MCF 10A (cell line): ENCODE measurements at regions of chr7 and their contacts with region 1.

Region 1: DNA sequence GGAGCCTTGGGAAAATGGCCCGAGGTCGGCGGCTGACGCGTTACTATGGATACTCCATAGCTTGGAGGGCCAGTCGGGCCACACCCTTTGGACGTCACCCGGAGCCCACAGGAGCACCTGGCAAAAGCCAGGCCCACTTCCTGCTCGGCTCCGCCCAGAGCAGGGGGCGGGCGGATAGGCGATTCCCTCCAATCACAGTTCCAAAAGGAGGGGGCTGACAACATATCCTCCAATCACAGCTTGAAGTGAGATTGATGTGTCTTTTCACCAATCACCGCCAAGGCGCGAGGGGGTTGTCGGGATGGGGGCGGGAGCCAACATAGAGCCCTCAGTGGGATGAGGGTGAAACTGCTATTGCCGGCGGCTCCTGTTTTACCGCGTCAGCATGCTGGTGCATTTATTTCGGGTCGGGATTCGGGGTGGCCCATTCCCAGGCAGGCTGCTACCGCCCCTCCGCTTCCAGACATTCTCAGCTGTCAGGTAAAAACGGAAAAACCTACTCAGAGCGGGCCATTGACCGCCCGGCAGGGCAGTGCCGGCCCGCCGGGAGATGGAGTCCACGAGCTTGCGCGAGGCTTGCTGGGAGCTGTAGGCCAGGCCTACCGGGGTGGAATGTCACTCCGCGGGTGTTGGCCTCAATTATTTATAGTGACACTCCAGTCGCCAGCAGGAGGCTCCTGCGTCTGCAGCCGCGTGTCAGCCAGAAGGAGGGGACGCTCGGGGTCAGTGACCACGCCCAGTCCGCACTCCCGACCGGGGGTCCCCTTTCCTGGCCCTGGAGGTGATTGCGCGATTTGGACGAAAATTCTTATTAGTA is at the start of gene ABCB8:
- DNase-seq: peak; percentile 99
- H3K4me3 Mint-ChIP-seq: peak within 1 kb of the TSS; percentile 97
- H3K27ac Mint-ChIP-seq: peak within 1 kb of the TSS; percentile 100
- H3K4me1 Mint-ChIP-seq: peaks cover 29% of the 10 kb centered on the region
- H3K27me3 Mint-ChIP-seq: no peaks in the 10 kb centered on the region
- CTCF ChIP-seq: peak; percentile 37
- total RNA-seq, gene ABCB8: 73.4 and 76.1 TPM in 2 replicates

Region 2: GRCh38 chr7:151038951-151039849 is 10.9 kb after region 1 on chr7:
- CTCF ChIA-PET with region 1: interaction called, 4 read pairs
- POLR2A ChIA-PET with region 1: interaction called, 11 read pairs
- intact Hi-C with region 1: no loop called
- DNase-seq: peak; percentile 85
- H3K4me3 Mint-ChIP-seq: no peak overlapping the region
- H3K27ac Mint-ChIP-seq: peak overlapping the region; percentile 23
- H3K4me1 Mint-ChIP-seq: peaks cover 15% of the 10 kb centered on the region
- H3K27me3 Mint-ChIP-seq: no peaks in the 10 kb centered on the region
- CTCF ChIP-seq: no peak

Region 3: GRCh38 chr7:151057989-151058780 is 29.8 kb after region 1 on chr7:
- CTCF ChIA-PET with region 1: interaction called, 5 read pairs
- POLR2A ChIA-PET with region 1: interaction called, 42 read pairs
- intact Hi-C with region 1: loop called (anchors 1 kb)
- DNase-seq: peak; percentile 99
- H3K4me3 Mint-ChIP-seq: peak overlapping the region; percentile 97
- H3K27ac Mint-ChIP-seq: peak overlapping the region; percentile 87
- H3K4me1 Mint-ChIP-seq: peaks cover 34% of the 10 kb centered on the region
- H3K27me3 Mint-ChIP-seq: no peaks in the 10 kb centered on the region
- CTCF ChIP-seq: no peak

Region 4: DNA sequence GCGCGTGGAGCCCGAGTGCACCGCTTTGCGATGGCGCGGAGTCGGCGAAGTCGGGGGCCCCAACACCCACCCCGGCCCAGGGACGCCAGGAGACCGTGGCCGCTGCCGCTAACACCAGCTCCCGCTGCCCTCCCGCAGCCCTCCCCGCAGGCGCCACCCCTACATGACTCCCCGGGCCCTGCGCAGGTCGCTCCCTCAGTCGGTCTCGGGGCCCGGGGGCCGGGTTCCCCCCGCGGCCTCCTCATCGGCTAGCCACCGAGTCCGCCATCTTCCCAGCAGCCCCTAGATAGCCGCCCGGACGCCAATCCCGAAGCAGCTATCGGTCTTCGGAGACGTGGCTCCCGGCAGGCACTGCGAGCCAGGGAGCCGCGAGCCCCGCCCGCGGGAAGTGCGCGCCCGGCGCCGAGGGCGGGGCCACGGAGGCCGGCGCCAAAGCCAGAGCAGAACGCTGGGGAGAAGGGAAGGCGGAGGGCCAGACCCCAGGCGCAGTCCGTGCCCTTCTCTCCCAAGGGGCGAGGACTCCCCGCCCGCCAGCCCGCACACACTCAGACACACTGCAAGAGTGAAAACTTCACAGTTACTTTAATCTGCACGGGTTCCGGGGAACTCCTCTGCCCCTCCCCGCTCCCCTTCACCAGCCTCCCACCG is 52.3 kb after region 1 on chr7 and contains the start of gene FASTK:
- CTCF ChIA-PET with region 1: interaction called, 3 read pairs
- POLR2A ChIA-PET with region 1: interaction called, 14 read pairs
- intact Hi-C with region 1: loop called (anchors 2 kb)
- DNase-seq: peak; percentile 91
- H3K4me3 Mint-ChIP-seq: peak within 1 kb of the TSS; percentile 91
- H3K27ac Mint-ChIP-seq: peak within 1 kb of the TSS; percentile 83
- H3K4me1 Mint-ChIP-seq: peaks cover 32% of the 10 kb centered on the region
- H3K27me3 Mint-ChIP-seq: no peaks in the 10 kb centered on the region
- CTCF ChIP-seq: no peak
- total RNA-seq, gene FASTK: 79.3 and 83.6 TPM in 2 replicates

Region 5: GRCh38 chr7:151085691-151086620 is 57.6 kb after region 1 on chr7 and contains the start of gene AGAP3:
- CTCF ChIA-PET with region 1: interaction called, 3 read pairs
- POLR2A ChIA-PET with region 1: interaction called, 14 read pairs
- intact Hi-C with region 1: loop called (anchors 2 kb)
- DNase-seq: peak; percentile 73
- H3K4me3 Mint-ChIP-seq: peak within 1 kb of the TSS; percentile 77
- H3K27ac Mint-ChIP-seq: peak within 1 kb of the TSS; percentile 44
- H3K4me1 Mint-ChIP-seq: peaks cover 34% of the 10 kb centered on the region
- H3K27me3 Mint-ChIP-seq: no peaks in the 10 kb centered on the region
- CTCF ChIP-seq: no peak
- total RNA-seq, gene AGAP3: 95.6 and 138 TPM in 2 replicates